CD14-positive monocyte (primary cell): ENCODE measurements at regions of chr7 and their contacts with region 1.

Region 1: GRCh38 chr7:50467817-50468610 is 17.9 kb upstream of the FIGNL1 start:
- DNase-seq: peak; percentile 46 to 64 (median 58)
- H3K4me3 ChIP-seq: no peak overlapping the region
- H3K4me3 Mint-ChIP-seq: peak overlapping the region; percentile 40 to 57
- H3K27ac ChIP-seq: no peak overlapping the region
- H3K27ac Mint-ChIP-seq: no peak overlapping the region
- H3K4me1 ChIP-seq: peaks cover 7% of the 10 kb centered on the region in 2 donors
- H3K4me1 Mint-ChIP-seq: peaks cover 8% of the 10 kb centered on the region
- H3K27me3 ChIP-seq: peaks cover 0 to 3% of the 10 kb centered on the region in 2 donors
- H3K27me3 Mint-ChIP-seq: peaks cover 3 to 9% (median 5%) of the 10 kb centered on the region in 3 donors
- CTCF ChIP-seq: peak; percentile 85

Region 2: GRCh38 chr7:50632561-50633413 is 164.8 kb after region 1 on chr7:
- intact Hi-C with region 1: loop called in 1 of 2 experiments (anchors 5 kb)
- DNase-seq: peak; percentile 22 to 63 (median 41)
- H3K4me3 ChIP-seq: no peak overlapping the region
- H3K4me3 Mint-ChIP-seq: no peak overlapping the region
- H3K27ac ChIP-seq: no peak overlapping the region
- H3K27ac Mint-ChIP-seq: peak overlapping the region in 1 of 7 donors; percentile 43
- H3K4me1 ChIP-seq: no peaks in the 10 kb centered on the region
- H3K4me1 Mint-ChIP-seq: peaks cover 2% of the 10 kb centered on the region
- H3K27me3 ChIP-seq: no peaks in the 10 kb centered on the region
- H3K27me3 Mint-ChIP-seq: no peaks in the 10 kb centered on the region
- CTCF ChIP-seq: peak; percentile 96

Region 3: DNA sequence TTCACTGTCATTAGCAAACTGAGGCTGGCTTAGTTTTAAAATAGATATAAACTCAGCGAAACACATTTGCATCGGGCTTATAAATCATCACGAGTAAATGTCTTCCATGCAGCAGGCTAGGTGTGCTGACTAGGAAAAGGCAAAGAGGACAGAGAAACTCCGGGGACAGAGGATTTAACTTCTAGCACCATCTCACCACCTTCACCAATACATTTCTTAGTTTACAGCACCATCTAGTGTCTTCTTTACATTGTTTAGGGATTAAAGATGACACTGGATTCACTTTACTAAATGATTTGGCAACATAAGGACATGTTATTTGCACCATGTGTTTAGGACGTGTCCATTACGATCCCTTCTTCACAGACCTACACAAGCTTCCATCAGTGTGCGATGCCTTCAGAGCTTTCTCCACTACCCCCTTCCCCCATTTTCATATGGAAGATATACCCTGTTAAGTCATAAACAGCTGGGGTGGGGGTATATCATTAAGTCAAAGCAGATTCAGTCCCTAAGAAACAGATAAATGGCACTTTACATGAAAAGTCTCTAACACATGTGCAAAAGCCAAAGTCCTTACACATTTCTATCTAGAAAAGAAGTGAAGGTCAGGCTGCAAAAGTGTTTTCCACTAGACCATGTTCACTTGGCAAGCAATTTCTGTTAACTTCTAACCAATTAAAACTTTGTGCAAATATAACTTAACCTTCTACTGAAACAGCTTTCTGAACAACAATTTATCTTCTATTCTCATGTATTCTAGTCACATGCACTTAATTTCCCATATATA is 211.4 kb after region 1 on chr7:
- intact Hi-C with region 1: loop called (anchors 2 to 5 kb)
- DNase-seq: peak; percentile 12 to 33 (median 16)
- H3K4me3 ChIP-seq: no peak overlapping the region
- H3K4me3 Mint-ChIP-seq: no peak overlapping the region
- H3K27ac ChIP-seq: no peak overlapping the region
- H3K27ac Mint-ChIP-seq: no peak overlapping the region
- H3K4me1 ChIP-seq: peaks cover 6 to 12% of the 10 kb centered on the region in 2 donors
- H3K4me1 Mint-ChIP-seq: peaks cover 16% of the 10 kb centered on the region
- H3K27me3 ChIP-seq: no peaks in the 10 kb centered on the region
- H3K27me3 Mint-ChIP-seq: peaks cover 0 to 2% (median 0%) of the 10 kb centered on the region in 3 donors
- CTCF ChIP-seq: peak; percentile 63

Region 4: GRCh38 chr7:51162724-51163329 is 694.8 kb after region 1 on chr7:
- intact Hi-C with region 1: loop called in 1 of 2 experiments (anchors 5 kb)
- DNase-seq: peak; percentile 12 to 46 (median 39)
- H3K4me3 ChIP-seq: no peak overlapping the region
- H3K4me3 Mint-ChIP-seq: no peak overlapping the region
- H3K27ac ChIP-seq: no peak overlapping the region
- H3K27ac Mint-ChIP-seq: no peak overlapping the region
- H3K4me1 ChIP-seq: peaks cover 0 to 5% of the 10 kb centered on the region in 2 donors
- H3K4me1 Mint-ChIP-seq: peaks cover 5% of the 10 kb centered on the region
- H3K27me3 ChIP-seq: peaks cover 0 to 4% of the 10 kb centered on the region in 2 donors
- H3K27me3 Mint-ChIP-seq: peaks cover 0 to 2% (median 2%) of the 10 kb centered on the region in 3 donors
- CTCF ChIP-seq: peak; percentile 90